Activated CD8-positive, alpha-beta T cell treated with anti-CD3 and anti-CD28 coated beads for 36 hours (primary cell): ENCODE measurements at regions of chr1 and their contacts with region 1.

Region 1: GRCh38 chr1:18883636-18884418 is 18.5 kb downstream of the ALDH4A1 start:
- DNase-seq: peak; percentile 86
- ATAC-seq: peak; percentile 95
- H3K4me3 Mint-ChIP-seq: no peak overlapping the region
- H3K27ac Mint-ChIP-seq: no peak overlapping the region
- H3K4me1 Mint-ChIP-seq: no peaks in the 10 kb centered on the region
- H3K27me3 Mint-ChIP-seq: no peaks in the 10 kb centered on the region
- CTCF ChIP-seq: peak; percentile 90

Region 2: GRCh38 chr1:19010995-19011844 is 127.4 kb after region 1 on chr1:
- CTCF ChIA-PET with region 1: interaction called, 11 read pairs
- POLR2A ChIA-PET with region 1: no interaction called
- intact Hi-C with region 1: no loop called
- DNase-seq: peak; percentile 95
- ATAC-seq: peak; percentile 97
- H3K4me3 Mint-ChIP-seq: no peak overlapping the region
- H3K27ac Mint-ChIP-seq: peak overlapping the region; percentile 81
- H3K4me1 Mint-ChIP-seq: peaks cover 34% of the 10 kb centered on the region
- H3K27me3 Mint-ChIP-seq: no peaks in the 10 kb centered on the region
- CTCF ChIP-seq: no peak

Region 3: DNA sequence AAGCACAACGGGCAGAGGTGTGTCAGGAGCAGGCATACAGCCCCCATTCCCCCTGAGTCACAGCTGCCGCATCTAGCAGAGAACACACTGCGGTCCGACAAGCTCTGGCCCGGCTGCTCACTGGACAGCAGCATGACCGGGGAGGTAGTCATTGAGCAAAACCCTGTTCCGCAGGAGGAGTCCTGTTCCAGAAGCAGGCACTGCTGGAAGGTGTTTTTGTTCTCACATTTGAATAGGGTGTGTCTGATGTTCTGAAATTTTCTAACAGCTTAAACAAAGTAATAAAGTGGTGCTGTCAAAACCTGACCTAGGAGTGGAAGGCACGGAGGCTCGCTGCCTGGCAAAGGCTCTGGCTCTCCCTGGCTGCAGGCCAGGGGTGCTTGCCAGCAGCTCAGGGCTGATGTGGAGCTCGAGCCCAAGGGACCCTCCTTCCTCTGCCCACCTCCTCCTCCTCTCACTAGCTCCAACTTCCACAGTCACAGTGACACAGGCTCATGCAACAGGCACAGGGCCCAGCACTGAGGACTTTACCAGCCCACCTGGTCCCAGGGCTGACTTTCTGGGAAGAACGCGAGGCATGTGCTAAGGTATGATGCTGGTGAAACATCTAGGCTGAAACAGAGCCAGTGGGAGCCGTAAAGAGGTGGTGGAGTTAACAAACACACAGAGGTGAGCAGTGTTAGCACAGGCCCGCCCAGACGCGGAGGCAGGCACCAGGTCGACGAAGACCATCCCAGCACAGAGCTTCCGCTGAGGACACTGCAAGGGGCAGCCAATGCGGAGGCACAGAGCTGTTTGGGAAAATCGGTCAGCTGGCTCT is 191.3 kb after region 1 on chr1:
- CTCF ChIA-PET with region 1: interaction called, 11 read pairs
- POLR2A ChIA-PET with region 1: no interaction called
- intact Hi-C with region 1: no loop called
- DNase-seq: no peak
- ATAC-seq: peak; percentile 34
- H3K4me3 Mint-ChIP-seq: no peak overlapping the region
- H3K27ac Mint-ChIP-seq: peak overlapping the region; percentile 53
- H3K4me1 Mint-ChIP-seq: peaks cover 33% of the 10 kb centered on the region
- H3K27me3 Mint-ChIP-seq: no peaks in the 10 kb centered on the region
- CTCF ChIP-seq: no peak

Region 4: DNA sequence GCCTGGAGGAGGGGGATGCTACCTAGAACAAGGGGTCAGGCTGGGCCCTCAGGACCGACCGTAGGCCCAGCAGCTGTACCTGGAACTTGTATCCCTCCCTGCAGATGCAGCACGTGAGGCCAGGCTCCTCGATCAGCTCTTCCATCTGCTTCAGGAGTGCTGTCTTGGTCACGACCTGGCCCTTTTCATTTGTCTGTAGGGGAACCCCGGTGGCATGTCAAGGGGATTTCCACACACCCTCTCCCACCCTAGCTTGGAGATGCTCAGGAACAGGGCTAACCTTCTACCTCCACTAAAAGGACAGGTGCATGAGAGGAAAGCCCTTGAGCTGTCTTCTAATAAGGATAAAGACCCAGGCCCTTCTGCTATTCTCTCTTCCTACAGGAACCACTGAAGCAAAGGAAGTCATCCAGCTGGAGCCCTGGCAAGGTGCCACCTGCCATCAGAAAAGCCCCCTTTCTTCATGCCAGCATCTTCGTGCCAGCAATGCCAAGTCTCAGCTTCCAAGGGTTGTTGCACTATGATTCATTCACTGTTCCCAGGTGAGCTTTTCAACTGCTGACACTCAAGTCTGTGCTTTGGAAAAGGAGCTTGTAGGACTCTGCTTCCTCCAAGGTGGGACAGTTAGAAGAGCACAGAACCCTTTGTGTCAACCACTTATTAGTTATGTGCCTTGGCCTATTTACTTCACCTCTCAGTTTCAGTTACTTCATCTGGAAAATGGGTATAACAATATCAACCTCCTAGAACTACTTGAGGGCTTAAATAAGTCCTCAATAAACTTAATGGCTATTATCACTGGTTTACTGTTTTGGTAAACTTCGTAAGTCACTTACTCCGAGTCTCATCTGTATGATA is 204.1 kb after region 1 on chr1:
- CTCF ChIA-PET with region 1: interaction called, 18 read pairs
- POLR2A ChIA-PET with region 1: no interaction called
- intact Hi-C with region 1: no loop called
- DNase-seq: peak; percentile 44
- ATAC-seq: peak; percentile 73
- H3K4me3 Mint-ChIP-seq: no peak overlapping the region
- H3K27ac Mint-ChIP-seq: peak overlapping the region; percentile 65
- H3K4me1 Mint-ChIP-seq: peaks cover 18% of the 10 kb centered on the region
- H3K27me3 Mint-ChIP-seq: no peaks in the 10 kb centered on the region
- CTCF ChIP-seq: no peak

Region 5: DNA sequence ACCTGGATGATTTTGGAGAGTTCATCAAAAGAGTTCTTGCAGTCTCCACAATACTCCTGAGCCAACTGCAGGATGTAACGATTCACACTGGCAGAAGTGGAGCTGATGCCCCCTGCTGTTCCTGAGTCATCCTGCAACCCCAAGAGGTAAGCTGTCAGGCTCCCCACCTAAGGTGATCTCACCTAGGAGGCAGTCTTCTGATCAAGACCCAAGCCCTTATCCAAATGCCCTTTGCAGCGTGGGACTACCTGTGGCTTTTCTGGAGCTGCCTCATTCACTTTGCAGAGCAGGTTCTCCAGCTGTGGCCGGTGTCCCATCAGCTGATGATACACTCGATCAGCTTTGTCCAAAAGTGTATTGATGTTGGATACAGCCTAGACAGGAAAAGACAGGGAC is 229.9 kb after region 1 on chr1:
- CTCF ChIA-PET with region 1: interaction called, 19 read pairs
- POLR2A ChIA-PET with region 1: no interaction called
- intact Hi-C with region 1: no loop called
- DNase-seq: peak; percentile 61
- ATAC-seq: peak; percentile 83
- H3K4me3 Mint-ChIP-seq: no peak overlapping the region
- H3K27ac Mint-ChIP-seq: no peak overlapping the region
- H3K4me1 Mint-ChIP-seq: no peaks in the 10 kb centered on the region
- H3K27me3 Mint-ChIP-seq: no peaks in the 10 kb centered on the region
- CTCF ChIP-seq: peak; percentile 40